Activated CD4-positive, alpha-beta T cell treated with anti-CD3 and anti-CD28 coated beads, Interleukin-2, amount 10 ng/mL, durations not matched to agents 24 days and 14 days (primary cell): ENCODE measurements at regions of chr10 and their contacts with region 1.

Region 1: GRCh38 chr10:90227217-90227656 is 525.8 kb downstream of the KIF20B start:
- DNase-seq: peak; percentile 66
- H3K4me3 Mint-ChIP-seq: no peak overlapping the region
- H3K27ac Mint-ChIP-seq: peak overlapping the region; percentile 46
- H3K4me1 Mint-ChIP-seq: peaks cover 8% of the 10 kb centered on the region
- H3K27me3 Mint-ChIP-seq: peaks cover 5% of the 10 kb centered on the region

Region 2: GRCh38 chr10:89805599-89806013 is 421.6 kb before region 1 on chr10:
- intact Hi-C with region 1: loop called (anchors 1 kb)
- DNase-seq: peak; percentile 65
- H3K4me3 Mint-ChIP-seq: no peak overlapping the region
- H3K27ac Mint-ChIP-seq: peak overlapping the region; percentile 27
- H3K4me1 Mint-ChIP-seq: peaks cover 21% of the 10 kb centered on the region
- H3K27me3 Mint-ChIP-seq: peaks cover 22% of the 10 kb centered on the region

Region 3: GRCh38 chr10:90087197-90088007 is 139.8 kb before region 1 on chr10:
- intact Hi-C with region 1: loop called (anchors 1 kb)
- DNase-seq: no peak
- H3K4me3 Mint-ChIP-seq: no peak overlapping the region
- H3K27ac Mint-ChIP-seq: no peak overlapping the region
- H3K4me1 Mint-ChIP-seq: peaks cover 6% of the 10 kb centered on the region
- H3K27me3 Mint-ChIP-seq: peaks cover 1% of the 10 kb centered on the region

Region 4: DNA sequence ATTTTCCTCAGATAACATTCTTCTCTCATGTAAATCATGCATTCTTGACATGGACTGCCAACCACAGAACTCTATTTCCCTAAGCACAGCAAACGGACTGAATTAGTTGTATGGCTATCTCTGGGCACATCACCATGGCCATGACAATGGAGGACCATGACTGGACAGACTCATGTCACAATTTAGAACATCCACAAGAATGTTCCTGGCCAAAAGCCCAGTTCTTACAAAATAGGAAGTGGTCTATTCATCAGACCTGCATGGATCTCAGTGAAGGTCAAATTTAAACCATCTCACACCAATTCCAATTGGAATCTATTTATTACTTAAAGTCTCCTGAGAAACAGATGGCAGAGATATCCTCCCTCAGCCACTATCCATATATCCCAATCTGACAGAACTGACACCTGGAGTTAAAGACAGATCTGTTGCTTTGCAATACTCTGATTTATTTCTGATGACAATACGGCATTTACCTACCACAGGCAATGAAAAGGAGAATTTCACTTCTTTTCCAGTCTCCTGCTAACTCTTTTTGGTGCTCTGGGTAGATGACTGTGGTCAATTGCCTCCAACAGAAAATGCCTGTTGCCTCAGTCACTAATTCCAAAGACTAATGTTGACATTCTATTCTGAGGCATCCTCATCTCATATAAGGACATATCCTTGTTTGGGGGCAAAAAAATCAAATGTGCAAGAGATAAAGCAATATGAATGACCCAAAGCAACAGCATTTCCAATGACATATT is 375.8 kb after region 1 on chr10:
- intact Hi-C with region 1: no loop called
- DNase-seq: peak; percentile 32
- H3K4me3 Mint-ChIP-seq: no peak overlapping the region
- H3K27ac Mint-ChIP-seq: no peak overlapping the region
- H3K4me1 Mint-ChIP-seq: no peaks in the 10 kb centered on the region
- H3K27me3 Mint-ChIP-seq: no peaks in the 10 kb centered on the region